ENCODE measurements at regions of chr12 and their contacts with region 1.

Region 1: GRCh38 chr12:96578526-96579125 is 89.2 kb downstream of the CFAP54 start:
- DNase-seq: no peak

Region 2: GRCh38 chr12:96327346-96327745 is 251.3 kb before region 1 on chr12:
- intact Hi-C with region 1: no loop called
- DNase-seq: no peak

Region 3: GRCh38 chr12:97308576-97309198 is 730.1 kb after region 1 on chr12:
- intact Hi-C with region 1: loop called (anchors 2 kb)
- DNase-seq: no peak

Region 4: DNA sequence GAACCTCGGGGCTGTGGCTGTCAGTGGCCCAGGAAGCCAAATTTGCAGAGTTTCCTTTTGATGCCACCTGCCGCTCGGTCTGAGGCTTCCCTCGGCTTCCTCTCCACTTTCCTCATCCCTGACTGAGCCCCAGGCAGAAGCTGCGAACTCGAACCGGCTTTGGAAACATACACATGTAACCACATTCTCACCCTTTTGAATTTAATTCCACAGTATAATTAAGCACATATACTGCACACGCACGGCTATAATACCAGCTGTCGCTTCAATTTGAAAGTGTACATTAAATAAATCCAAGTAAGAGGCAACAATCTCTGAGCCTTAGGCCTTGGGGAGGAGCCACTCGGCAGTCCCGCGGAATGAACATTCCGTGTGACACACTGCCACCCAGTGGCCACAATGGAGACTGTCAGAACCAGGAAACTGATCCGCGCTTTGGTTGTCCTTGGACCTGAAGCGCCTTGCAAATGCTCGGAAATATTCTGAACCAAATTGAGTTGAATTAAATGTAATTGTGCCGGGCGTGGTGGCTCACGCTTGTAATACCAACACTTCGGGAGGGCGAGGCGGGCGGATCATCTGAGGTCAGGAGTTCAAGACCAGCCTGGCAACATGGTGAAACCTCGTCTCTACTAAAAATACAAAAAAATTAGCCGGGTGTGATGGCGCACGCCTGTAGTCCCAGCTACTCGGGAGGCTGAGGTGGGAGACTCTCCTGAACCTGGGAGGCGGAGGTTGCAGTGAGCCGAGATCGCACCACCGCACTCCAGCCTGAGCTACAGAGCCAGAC is 1818.9 kb after region 1 on chr12:
- intact Hi-C with region 1: loop called (anchors 1 kb)
- DNase-seq: peak; percentile 57 to 96 (median 84)

Measured in posterior cingulate gyrus (tissue), 11 donors.